Activated T-helper 1 cell treated with anti-CD3 and anti-CD28 coated beads, Interleukin-12 subunit alpha, Interleukin-12 subunit beta, Interleukin-2, Interleukin-4 antibody, amounts not matched to agents 30 ng/mL and 10 ng/mL and 1 ng/mL, durations not matched to agents 14 hours and 24 hours and 36 hours (primary cell): ENCODE measurements at regions of chr10 and their contacts with region 1.

Region 1: GRCh38 chr10:102503281-102504220 is at the start of gene SUFU:
- DNase-seq: peak; percentile 97
- H3K4me3 Mint-ChIP-seq: no peak within 1 kb of the TSS
- H3K27ac Mint-ChIP-seq: peak within 1 kb of the TSS; percentile 84
- H3K4me1 Mint-ChIP-seq: peaks cover 25% of the 10 kb centered on the region
- H3K27me3 Mint-ChIP-seq: no peaks in the 10 kb centered on the region
- total RNA-seq, gene SUFU: 9.3 and 11.6 TPM in 2 replicates

Region 2: DNA sequence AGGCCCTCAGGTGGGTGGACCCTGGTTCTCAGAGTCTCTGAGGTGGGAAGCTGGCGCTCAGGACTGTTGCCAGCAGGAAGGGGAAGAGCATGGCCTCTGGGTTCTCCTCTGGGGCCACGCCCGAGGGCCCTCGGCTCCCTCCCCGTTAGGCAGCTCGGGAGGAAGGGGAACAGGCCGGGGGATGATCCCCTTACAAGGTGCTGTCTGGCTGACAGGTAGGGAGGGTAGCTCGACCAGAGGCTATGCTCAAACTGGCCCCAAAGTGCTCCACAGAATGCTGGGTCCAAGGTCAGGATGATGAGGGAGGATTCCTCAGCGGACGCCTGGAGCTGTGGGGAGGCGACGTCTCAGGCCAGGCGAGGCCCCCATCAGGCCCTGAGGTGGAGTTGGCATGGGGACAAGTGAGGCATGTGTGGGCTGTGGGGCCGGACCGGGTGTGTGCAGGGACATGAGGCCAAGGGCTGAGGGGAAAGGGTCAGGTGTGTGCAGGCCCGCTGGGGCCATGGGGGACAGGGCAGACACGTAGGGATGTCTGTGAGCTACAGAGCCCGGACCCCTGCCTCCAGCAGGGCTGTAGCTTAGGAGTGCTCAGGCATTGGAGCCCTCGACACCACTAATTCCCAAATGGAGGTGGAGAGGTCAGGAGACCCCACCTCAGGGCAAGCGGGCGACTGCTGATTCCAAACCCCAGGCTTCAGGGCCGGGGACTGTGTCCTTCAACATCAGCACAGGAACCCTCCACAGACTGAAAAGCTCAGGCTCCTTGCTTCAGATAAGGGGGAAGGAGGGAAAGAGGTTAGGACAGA is 932.6 kb before region 1 on chr10:
- intact Hi-C with region 1: no loop called
- DNase-seq: no peak
- H3K4me3 Mint-ChIP-seq: peak overlapping the region; percentile 15
- H3K27ac Mint-ChIP-seq: no peak overlapping the region
- H3K4me1 Mint-ChIP-seq: no peaks in the 10 kb centered on the region
- H3K27me3 Mint-ChIP-seq: peaks cover 32% of the 10 kb centered on the region

Region 3: GRCh38 chr10:102132563-102133372 is 370.8 kb before region 1 on chr10 and contains the start of gene PPRC1:
- intact Hi-C with region 1: loop called (anchors 1 kb)
- DNase-seq: peak; percentile 97
- H3K4me3 Mint-ChIP-seq: peak within 1 kb of the TSS; percentile 95
- H3K27ac Mint-ChIP-seq: peak within 1 kb of the TSS; percentile 94
- H3K4me1 Mint-ChIP-seq: peaks cover 29% of the 10 kb centered on the region
- H3K27me3 Mint-ChIP-seq: no peaks in the 10 kb centered on the region
- total RNA-seq, gene PPRC1: 112 and 115 TPM in 2 replicates

Region 4: GRCh38 chr10:102394079-102394800 is 109.3 kb before region 1 on chr10:
- intact Hi-C with region 1: loop called (anchors 1 kb)
- DNase-seq: peak; percentile 99
- H3K4me3 Mint-ChIP-seq: peak overlapping the region; percentile 90
- H3K27ac Mint-ChIP-seq: peak overlapping the region; percentile 97
- H3K4me1 Mint-ChIP-seq: peaks cover 47% of the 10 kb centered on the region
- H3K27me3 Mint-ChIP-seq: no peaks in the 10 kb centered on the region

Region 5: DNA sequence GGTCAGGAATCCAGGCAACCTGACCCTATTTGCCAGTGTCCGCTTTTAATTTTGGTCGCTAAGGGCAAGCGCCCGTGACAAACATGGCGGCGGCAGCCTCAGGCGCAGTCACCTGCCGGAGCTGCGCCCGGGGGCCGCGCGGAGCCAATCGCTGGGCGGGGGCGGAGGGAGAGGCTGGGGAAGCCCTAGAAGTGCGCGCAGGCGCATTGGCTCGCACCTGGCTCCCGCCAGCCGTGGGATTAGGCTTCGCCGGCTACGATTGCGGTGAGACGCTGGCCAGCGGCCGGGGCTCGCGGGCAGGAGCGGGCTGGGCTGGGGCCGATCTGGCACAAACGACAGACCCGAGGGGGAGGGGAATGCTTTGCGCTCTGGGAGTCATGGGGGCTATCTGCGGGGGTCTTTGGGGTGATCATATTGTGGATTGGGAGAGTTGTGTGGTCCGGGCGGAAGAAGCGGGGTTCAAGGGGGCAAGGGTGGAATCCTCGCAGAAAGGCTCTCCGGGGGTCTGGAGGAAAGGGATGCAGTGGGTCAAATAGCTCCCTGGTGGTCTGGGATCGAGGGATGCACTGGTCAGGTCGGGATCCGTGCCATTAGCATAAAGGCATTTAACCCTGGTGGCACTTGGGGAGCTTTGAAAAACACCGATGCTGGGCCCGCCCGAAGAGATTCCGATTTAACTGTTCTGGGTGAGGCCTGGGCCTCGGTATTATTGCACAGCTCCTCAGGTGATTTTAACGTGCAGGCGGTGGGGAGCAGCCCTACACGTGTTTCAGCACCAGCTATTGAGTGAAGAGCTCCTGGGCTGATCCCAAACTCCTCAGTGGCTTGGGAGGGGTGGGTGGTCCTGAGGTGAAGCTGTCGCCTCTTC is 42.1 kb before region 1 on chr10:
- intact Hi-C with region 1: loop called (anchors 1 kb)
- DNase-seq: peak; percentile 91
- H3K4me3 Mint-ChIP-seq: peak overlapping the region; percentile 94
- H3K27ac Mint-ChIP-seq: peak overlapping the region; percentile 87
- H3K4me1 Mint-ChIP-seq: peaks cover 26% of the 10 kb centered on the region
- H3K27me3 Mint-ChIP-seq: peaks cover 1% of the 10 kb centered on the region

Region 6: DNA sequence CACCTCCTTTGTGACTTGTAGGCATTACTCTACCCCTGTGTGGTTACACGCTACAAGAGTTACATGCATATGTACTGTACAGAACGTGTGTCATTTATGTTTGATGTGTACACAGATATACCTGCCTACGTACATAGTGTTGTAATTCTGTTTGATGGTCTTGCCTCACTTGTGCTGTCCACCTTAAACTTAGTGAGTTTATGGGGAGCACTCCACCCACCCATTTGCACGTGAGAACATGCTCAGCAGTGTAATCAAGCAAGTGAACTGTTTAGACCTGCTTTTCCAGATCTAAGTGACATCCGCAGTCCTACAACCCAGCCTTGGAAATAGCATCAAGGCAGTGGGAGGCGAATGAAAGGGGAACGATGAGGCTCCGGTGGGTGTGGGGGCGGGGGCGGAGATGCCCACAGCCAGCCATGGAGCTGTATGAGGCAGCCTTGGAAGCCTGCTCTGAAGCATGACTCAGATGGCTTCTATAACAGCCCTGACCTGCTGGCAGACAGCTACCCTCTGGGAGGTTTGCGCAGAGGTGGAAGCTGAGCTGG is 52.3 kb after region 1 on chr10:
- intact Hi-C with region 1: no loop called
- DNase-seq: no peak
- H3K4me3 Mint-ChIP-seq: no peak overlapping the region
- H3K27ac Mint-ChIP-seq: no peak overlapping the region
- H3K4me1 Mint-ChIP-seq: peaks cover 8% of the 10 kb centered on the region
- H3K27me3 Mint-ChIP-seq: no peaks in the 10 kb centered on the region

Region 7: GRCh38 chr10:102641880-102642735 is 138.6 kb after region 1 on chr10:
- intact Hi-C with region 1: loop called (anchors 1 kb)
- DNase-seq: peak; percentile 94
- H3K4me3 Mint-ChIP-seq: peak overlapping the region; percentile 90
- H3K27ac Mint-ChIP-seq: peak overlapping the region; percentile 82
- H3K4me1 Mint-ChIP-seq: peaks cover 19% of the 10 kb centered on the region
- H3K27me3 Mint-ChIP-seq: no peaks in the 10 kb centered on the region

Region 8: DNA sequence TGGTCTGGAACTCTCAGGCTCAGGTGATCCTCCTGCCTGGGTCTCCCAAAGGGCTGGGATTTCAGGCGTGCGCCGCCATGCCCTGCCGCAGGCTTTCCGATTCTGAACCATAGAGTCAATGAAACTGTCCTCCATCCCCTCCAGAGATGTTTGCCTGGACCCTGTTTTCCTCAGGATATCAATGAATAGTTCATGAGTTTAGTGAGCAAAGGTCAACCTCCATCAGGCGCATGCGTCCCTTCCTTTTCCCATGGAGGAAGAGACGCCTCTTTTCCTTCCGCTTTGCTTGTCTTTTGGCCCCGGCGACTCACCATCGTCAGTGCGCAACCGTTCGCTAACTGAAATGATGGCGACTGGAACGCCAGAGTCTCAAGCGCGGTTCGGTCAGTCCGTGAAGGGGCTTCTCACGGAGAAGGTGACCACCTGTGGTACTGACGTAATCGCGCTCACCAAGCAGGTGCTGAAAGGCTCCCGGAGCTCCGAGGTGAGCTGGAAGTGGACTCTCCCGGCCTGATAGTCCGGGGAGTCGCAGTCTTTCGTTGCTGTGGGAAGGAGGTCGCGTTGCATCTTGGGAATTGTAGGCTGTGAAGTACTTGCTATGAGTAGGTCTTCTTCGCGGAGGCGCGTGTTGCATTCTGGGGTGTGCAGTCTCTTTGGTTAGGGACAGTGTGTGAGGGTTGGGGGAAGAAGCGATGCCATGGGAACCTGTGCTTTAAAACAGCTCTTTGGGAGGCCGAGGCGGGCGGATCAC is 350.6 kb after region 1 on chr10 and contains the start of gene BORCS7:
- intact Hi-C with region 1: loop called (anchors 2 kb)
- DNase-seq: peak; percentile 84
- H3K4me3 Mint-ChIP-seq: peak within 1 kb of the TSS; percentile 82
- H3K27ac Mint-ChIP-seq: peak within 1 kb of the TSS; percentile 92
- H3K4me1 Mint-ChIP-seq: peaks cover 19% of the 10 kb centered on the region
- H3K27me3 Mint-ChIP-seq: no peaks in the 10 kb centered on the region
- total RNA-seq, gene BORCS7: 9.7 and 12.6 TPM in 2 replicates